ENCODE measurements at regions of chr7 and their contacts with region 1.

Region 1: GRCh38 chr7:106285051-106285854 is 470 bp upstream of the NAMPT start:
- DNase-seq: peak; percentile 96
- ATAC-seq: peak; percentile 85
- H3K4me3 Mint-ChIP-seq: peak overlapping the region; percentile 89
- H3K27ac Mint-ChIP-seq: peak overlapping the region; percentile 98
- H3K4me1 Mint-ChIP-seq: peaks cover 31% of the 10 kb centered on the region
- H3K27me3 Mint-ChIP-seq: no peaks in the 10 kb centered on the region
- CTCF ChIP-seq: no peak

Region 2: GRCh38 chr7:105522062-105522936 is 763.0 kb before region 1 on chr7 and contains the start of gene PUS7:
- CTCF ChIA-PET with region 1: no interaction called
- POLR2A ChIA-PET with region 1: no interaction called
- intact Hi-C with region 1: loop called (anchors 1 kb)
- DNase-seq: peak; percentile 73
- ATAC-seq: peak; percentile 94
- H3K4me3 Mint-ChIP-seq: peak within 1 kb of the TSS; percentile 93
- H3K27ac Mint-ChIP-seq: peak within 1 kb of the TSS; percentile 82
- H3K4me1 Mint-ChIP-seq: peaks cover 27% of the 10 kb centered on the region
- H3K27me3 Mint-ChIP-seq: no peaks in the 10 kb centered on the region
- CTCF ChIP-seq: no peak
- total RNA-seq, gene PUS7: 17.8 and 18.0 TPM in 2 replicates

Region 3: GRCh38 chr7:106056513-106057203 is 228.6 kb before region 1 on chr7:
- CTCF ChIA-PET with region 1: no interaction called
- POLR2A ChIA-PET with region 1: interaction called, 10 read pairs
- intact Hi-C with region 1: no loop called
- DNase-seq: peak; percentile 55
- ATAC-seq: peak; percentile 53
- H3K4me3 Mint-ChIP-seq: peak overlapping the region; percentile 71
- H3K27ac Mint-ChIP-seq: peak overlapping the region; percentile 99
- H3K4me1 Mint-ChIP-seq: peaks cover 65% of the 10 kb centered on the region
- H3K27me3 Mint-ChIP-seq: no peaks in the 10 kb centered on the region
- CTCF ChIP-seq: peak; percentile 65

Region 4: DNA sequence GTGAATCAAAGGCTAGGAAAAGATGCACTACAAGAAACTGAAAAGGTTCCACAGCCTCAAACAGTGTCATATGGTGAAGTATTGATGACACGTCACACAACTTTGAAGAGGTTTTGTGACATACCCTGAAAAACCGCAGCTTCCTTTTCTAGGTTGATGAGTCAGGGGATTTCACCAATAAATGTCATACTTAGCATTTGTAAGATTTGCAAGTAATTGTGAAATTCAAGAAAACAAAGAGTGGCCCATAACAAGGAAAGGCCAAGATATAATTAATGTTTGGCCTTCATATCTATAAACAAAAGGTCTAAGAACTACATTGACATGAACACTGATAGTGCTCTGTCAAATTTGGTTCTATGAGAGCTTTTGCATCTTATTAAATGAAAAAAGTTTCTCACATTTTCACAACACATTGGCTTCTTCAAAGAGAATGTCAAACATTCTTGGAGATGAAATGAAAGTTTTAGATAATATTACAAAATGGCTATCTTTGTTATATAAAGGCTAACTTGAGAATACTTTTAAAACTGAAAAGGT is 61.5 kb after region 1 on chr7:
- CTCF ChIA-PET with region 1: interaction called, 3 read pairs
- POLR2A ChIA-PET with region 1: interaction called, 33 read pairs
- intact Hi-C with region 1: loop called (anchors 1 kb)
- DNase-seq: no peak
- ATAC-seq: peak; percentile 82
- H3K4me3 Mint-ChIP-seq: no peak overlapping the region
- H3K27ac Mint-ChIP-seq: peak overlapping the region; percentile 74
- H3K4me1 Mint-ChIP-seq: peaks cover 27% of the 10 kb centered on the region
- H3K27me3 Mint-ChIP-seq: peaks cover 6% of the 10 kb centered on the region
- CTCF ChIP-seq: no peak

Region 5: DNA sequence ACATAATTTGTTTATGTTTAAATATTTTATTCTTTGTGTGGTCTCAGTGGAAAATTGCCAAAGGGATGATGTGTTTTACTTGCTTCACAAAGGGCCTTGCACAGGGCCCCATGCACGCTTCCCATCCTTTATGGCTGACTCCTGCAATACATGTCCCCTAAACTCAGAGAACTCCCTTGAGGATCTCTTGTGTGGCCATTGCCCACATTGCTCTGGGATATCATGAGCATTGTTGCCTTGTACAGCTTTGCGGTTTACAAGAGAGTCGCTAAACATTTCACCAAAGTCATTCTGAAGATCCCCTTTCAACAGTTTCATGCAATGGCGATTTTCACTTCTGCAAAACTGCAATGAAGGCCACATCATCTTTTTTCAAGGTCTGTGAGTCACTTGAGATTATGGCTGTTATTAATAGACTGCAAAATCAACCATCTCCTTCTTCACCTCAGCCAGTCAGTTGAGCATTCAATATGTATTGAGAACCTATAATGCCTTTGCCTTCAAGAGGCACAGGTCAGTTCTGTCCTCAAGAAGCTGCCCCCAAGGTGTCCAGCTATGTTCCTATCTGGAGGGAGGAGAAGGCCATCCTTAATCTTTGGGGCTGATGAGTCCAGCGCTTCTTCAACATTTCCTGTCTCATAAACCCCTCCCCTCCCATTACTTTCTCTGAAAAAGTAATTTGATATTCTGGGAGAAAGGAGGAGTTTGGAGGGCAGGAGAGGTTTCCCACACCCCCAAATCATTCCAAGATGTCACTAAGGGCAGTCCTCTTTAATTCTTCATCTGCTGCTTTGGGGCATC is 267.6 kb after region 1 on chr7:
- CTCF ChIA-PET with region 1: no interaction called
- POLR2A ChIA-PET with region 1: no interaction called
- intact Hi-C with region 1: loop called (anchors 1 kb)
- DNase-seq: peak; percentile 27
- ATAC-seq: peak; percentile 92
- H3K4me3 Mint-ChIP-seq: peak overlapping the region; percentile 39
- H3K27ac Mint-ChIP-seq: peak overlapping the region; percentile 89
- H3K4me1 Mint-ChIP-seq: peaks cover 39% of the 10 kb centered on the region
- H3K27me3 Mint-ChIP-seq: no peaks in the 10 kb centered on the region
- CTCF ChIP-seq: no peak

Region 6: GRCh38 chr7:106717955-106718871 is 433.0 kb after region 1 on chr7:
- CTCF ChIA-PET with region 1: no interaction called
- POLR2A ChIA-PET with region 1: no interaction called
- intact Hi-C with region 1: loop called (anchors 5 kb)
- DNase-seq: no peak
- ATAC-seq: peak; percentile 88
- H3K4me3 Mint-ChIP-seq: no peak overlapping the region
- H3K27ac Mint-ChIP-seq: no peak overlapping the region
- H3K4me1 Mint-ChIP-seq: peaks cover 12% of the 10 kb centered on the region
- H3K27me3 Mint-ChIP-seq: no peaks in the 10 kb centered on the region
- CTCF ChIP-seq: no peak

Region 7: GRCh38 chr7:107130487-107131225 is 845.4 kb after region 1 on chr7:
- CTCF ChIA-PET with region 1: no interaction called
- POLR2A ChIA-PET with region 1: no interaction called
- intact Hi-C with region 1: loop called (anchors 2 kb)
- DNase-seq: no peak
- ATAC-seq: no peak
- H3K4me3 Mint-ChIP-seq: no peak overlapping the region
- H3K27ac Mint-ChIP-seq: no peak overlapping the region
- H3K4me1 Mint-ChIP-seq: peaks cover 11% of the 10 kb centered on the region
- H3K27me3 Mint-ChIP-seq: no peaks in the 10 kb centered on the region
- CTCF ChIP-seq: no peak

Measured in activated B cell treated with CpG ODN at 0.5 μM for 24 hours (primary cell).